Activated B cell treated with CpG ODN at 0.5 μM for 24 hours (primary cell): ENCODE measurements at regions of chr12 and their contacts with region 1.

Region 1: DNA sequence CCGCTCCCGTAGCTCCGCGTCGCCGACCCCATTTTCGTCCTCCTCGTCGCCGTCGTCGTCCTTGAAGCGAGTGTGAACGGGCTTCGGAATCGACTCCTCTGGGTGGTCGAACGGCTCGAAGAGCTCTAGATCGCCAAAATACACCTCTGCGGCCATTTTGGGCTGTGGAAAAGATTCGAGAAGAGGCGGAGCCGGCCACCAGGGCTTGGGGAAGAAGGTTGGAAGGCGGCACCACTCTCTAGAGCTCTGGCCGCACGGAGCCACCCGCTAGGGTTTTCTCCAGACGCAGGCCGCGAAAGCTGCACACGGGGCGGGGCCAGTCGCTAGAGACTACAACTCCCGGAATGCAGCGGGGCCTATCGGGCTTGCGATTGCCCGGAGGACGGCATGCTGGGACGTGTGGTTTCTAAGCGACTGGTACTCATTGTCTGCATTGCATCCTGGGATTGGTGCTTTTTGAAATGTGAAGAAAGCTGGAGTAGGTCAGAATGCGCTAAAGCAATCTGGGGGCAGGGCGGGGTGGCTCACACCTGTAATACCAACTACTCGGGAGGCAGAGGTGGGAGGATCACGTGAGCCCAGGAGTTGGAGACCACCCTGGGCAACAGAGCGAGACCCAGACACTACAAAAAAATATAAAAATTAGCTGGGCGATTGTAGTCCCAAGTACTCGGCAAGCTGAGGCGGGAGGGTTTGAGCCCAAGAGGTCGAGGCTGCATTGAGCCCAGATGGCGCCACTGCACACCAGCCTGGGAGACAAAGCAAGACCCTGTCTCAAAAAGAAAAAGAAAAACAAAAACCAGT is at the start of gene ZCCHC8:
- DNase-seq: peak; percentile 89
- ATAC-seq: peak; percentile 92
- H3K4me3 Mint-ChIP-seq: peak within 1 kb of the TSS; percentile 97
- H3K27ac Mint-ChIP-seq: peak within 1 kb of the TSS; percentile 97
- H3K4me1 Mint-ChIP-seq: peaks cover 44% of the 10 kb centered on the region
- H3K27me3 Mint-ChIP-seq: no peaks in the 10 kb centered on the region
- CTCF ChIP-seq: no peak
- total RNA-seq, gene ZCCHC8: 39.8 and 48.0 TPM in 2 replicates

Region 2: DNA sequence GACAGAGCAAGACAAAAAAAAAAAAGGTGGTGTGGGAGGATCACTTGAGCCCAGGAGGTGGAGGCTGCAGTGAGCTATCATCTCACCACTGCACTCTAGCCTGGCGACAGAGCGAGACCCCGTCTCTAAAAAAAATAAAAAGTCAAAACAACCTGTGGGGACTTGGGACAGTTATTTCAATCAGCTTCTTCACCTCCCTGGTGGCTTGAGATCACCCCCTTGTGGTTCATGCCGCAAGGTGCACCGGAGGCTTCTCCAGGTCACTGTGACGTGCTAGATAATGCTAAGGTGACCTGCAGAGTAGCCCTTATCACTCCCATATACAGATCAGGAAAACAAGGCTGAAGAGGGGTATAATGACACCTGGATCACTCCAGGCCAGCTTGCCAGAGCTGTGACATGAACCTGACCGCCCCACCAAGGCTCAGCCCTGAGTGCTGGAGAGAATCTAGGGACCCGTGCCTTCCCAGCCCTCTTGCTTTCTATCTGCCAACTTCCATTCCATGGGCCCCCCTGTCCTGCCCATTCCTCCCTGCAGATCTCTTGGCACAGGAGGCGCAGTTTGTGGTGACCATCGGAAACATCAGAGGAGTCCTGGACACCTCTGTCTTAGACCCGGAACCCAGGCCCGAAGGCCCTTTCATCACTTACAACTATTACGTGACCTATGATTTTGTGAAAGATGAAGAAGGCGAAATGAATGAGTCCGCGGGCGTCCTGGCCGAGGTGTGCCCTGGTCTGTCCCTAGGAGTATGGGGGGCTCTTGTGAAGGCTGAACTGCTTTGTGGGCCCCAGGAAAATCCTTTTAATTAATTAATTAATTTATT is 309.8 kb before region 1 on chr12:
- CTCF ChIA-PET with region 1: no interaction called
- POLR2A ChIA-PET with region 1: no interaction called
- intact Hi-C with region 1: no loop called
- DNase-seq: peak; percentile 42
- ATAC-seq: peak; percentile 92
- H3K4me3 Mint-ChIP-seq: no peak overlapping the region
- H3K27ac Mint-ChIP-seq: no peak overlapping the region
- H3K4me1 Mint-ChIP-seq: no peaks in the 10 kb centered on the region
- H3K27me3 Mint-ChIP-seq: no peaks in the 10 kb centered on the region
- CTCF ChIP-seq: no peak

Region 3: DNA sequence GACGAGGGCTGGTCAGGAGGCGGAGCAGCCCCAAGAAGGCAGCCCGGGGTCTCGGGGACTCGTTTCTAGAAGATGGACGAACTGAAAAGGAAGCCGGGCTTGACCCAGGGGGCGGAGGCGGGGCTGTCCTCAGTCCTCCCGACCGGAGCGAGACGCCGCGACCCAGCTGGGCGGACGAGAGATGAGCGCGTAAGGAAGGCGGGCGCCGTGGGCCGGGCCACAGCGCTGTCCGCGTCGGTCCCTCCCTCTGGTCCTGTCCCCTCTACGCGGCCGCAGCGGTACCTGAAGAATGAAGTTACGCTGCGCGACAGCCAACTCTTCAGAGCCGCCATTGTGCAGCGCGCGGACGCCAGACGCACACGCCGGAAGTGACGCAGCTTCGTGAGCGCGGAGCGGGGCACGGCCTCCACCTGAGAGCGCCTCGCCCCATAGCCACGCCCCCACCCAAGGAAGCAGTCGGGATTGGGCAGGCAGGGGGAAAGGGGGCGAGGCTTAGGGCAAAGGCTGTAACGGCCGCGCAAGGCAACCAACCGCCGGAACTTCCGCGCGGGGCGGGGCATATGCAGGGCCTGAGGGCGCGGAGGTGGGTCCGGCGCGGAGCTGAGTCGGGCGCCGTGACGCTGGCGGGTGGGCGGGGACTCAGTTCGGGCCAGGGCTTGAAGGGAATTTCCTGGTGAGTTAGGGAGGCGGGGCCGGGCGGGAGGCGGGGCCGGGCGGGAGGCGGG is 275.0 kb before region 1 on chr12 and contains the start of gene DIABLO:
- CTCF ChIA-PET with region 1: no interaction called
- POLR2A ChIA-PET with region 1: interaction called, 15 read pairs
- intact Hi-C with region 1: loop called (anchors 1 kb)
- DNase-seq: peak; percentile 99
- ATAC-seq: peak; percentile 93
- H3K4me3 Mint-ChIP-seq: peak within 1 kb of the TSS; percentile 89
- H3K27ac Mint-ChIP-seq: peak within 1 kb of the TSS; percentile 89
- H3K4me1 Mint-ChIP-seq: peaks cover 26% of the 10 kb centered on the region
- H3K27me3 Mint-ChIP-seq: no peaks in the 10 kb centered on the region
- CTCF ChIP-seq: no peak
- total RNA-seq, gene DIABLO: 39.8 and 51.3 TPM in 2 replicates

Region 4: DNA sequence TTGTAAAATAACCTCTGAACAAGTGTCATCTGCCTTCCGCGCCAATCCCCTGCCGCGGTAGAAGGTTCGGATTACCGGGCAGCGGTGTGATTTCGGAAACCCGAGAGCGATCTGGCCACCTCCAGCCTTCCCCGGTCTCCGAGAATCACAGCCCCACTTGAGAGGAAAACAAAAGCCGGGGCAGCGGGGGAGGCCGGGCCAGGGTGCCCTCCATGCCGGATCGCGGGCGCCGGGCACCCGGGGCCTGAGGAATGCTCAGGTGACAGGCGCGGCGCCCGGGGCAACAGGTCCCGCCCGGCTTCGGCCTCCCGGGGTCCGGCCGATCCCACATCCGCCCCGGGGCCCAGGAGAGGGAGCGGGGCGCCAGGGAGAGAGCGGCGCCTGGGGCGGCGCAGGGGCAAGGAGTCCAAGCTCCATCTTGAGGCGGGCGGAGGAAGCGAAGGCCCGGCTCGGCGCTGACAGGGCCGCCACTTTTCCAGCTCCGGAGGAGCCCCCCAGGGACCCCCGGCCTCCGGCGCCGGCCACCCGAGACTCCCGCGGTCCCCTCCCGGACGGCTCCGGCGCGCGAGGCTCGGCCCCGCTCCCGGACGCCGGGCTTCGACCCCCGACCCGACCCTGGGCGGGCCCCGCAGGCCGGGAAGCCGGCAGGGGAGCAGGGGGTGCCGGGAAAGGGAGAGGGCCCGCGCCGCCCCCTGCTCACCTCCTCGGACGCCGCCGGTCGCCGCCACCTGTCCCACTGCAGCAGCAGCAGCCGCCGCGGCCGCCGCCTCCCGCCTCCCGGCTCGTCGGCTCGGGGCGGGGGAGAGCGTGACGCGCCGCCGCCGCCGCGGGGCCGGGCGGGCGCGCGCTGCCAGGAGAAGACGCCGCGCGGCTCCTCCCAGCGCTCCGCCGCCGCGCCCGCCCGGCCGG is 78.8 kb before region 1 on chr12 and contains the start of gene CLIP1:
- CTCF ChIA-PET with region 1: interaction called, 3 read pairs
- POLR2A ChIA-PET with region 1: interaction called, 7 read pairs
- intact Hi-C with region 1: loop called (anchors 2 kb)
- DNase-seq: peak; percentile 71
- ATAC-seq: peak; percentile 67
- H3K4me3 Mint-ChIP-seq: peak within 1 kb of the TSS; percentile 91
- H3K27ac Mint-ChIP-seq: peak within 1 kb of the TSS; percentile 90
- H3K4me1 Mint-ChIP-seq: peaks cover 59% of the 10 kb centered on the region
- H3K27me3 Mint-ChIP-seq: no peaks in the 10 kb centered on the region
- CTCF ChIP-seq: no peak
- total RNA-seq, gene CLIP1: 58.6 and 63.2 TPM in 2 replicates

Region 5: DNA sequence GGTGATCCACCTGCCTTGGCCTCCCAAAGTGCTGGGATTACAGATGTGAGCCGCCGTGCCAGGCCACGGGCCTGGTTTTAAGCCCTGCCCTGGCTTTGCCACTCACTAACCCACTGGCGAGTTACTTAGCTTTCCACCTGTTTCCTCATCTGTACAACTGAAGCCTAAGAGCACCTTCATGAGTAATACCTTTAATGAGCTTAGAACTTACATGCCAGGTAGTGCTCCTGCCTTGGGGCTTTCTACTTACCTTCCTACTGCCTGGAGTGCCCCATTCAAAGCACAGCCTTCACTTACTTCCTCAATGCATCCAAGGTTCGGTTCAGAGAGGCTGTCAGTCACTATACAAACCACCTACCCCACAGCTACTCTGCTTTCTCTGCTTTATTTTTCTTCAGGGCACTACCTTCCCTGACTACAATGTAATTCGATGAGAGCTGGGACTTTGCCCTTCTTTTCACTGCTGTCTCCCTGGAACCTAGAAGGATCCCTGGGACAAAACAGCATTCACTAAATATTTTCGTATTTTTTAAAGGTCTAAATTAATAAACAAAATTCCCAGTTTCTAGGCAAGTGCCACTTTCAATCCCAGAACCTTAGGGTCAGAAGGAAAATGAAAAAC is 14.0 kb before region 1 on chr12:
- CTCF ChIA-PET with region 1: no interaction called
- POLR2A ChIA-PET with region 1: interaction called, 11 read pairs
- intact Hi-C with region 1: no loop called
- DNase-seq: no peak
- ATAC-seq: no peak
- H3K4me3 Mint-ChIP-seq: no peak overlapping the region
- H3K27ac Mint-ChIP-seq: no peak overlapping the region
- H3K4me1 Mint-ChIP-seq: peaks cover 4% of the 10 kb centered on the region
- H3K27me3 Mint-ChIP-seq: no peaks in the 10 kb centered on the region
- CTCF ChIP-seq: no peak

Region 6: GRCh38 chr12:122526683-122527477 is 26.0 kb after region 1 on chr12 and contains the starts of genes KNTC1 and RSRC2:
- CTCF ChIA-PET with region 1: interaction called, 7 read pairs
- POLR2A ChIA-PET with region 1: interaction called, 202 read pairs
- intact Hi-C with region 1: loop called (anchors 1 kb)
- DNase-seq: peak; percentile 85
- ATAC-seq: peak; percentile 91
- H3K4me3 Mint-ChIP-seq: no peak within 1 kb of the TSS
- H3K27ac Mint-ChIP-seq: no peak within 1 kb of the TSS
- H3K4me1 Mint-ChIP-seq: peaks cover 43% of the 10 kb centered on the region
- H3K27me3 Mint-ChIP-seq: no peaks in the 10 kb centered on the region
- CTCF ChIP-seq: no peak
- total RNA-seq, gene KNTC1: 45.5 and 64.0 TPM in 2 replicates
- total RNA-seq, gene RSRC2: 106 and 126 TPM in 2 replicates

Region 7: GRCh38 chr12:122726080-122726558 is 225.2 kb after region 1 on chr12:
- CTCF ChIA-PET with region 1: no interaction called
- POLR2A ChIA-PET with region 1: interaction called, 5 read pairs
- intact Hi-C with region 1: loop called (anchors 5 kb)
- DNase-seq: no peak
- ATAC-seq: peak; percentile 45
- H3K4me3 Mint-ChIP-seq: peak overlapping the region; percentile 36
- H3K27ac Mint-ChIP-seq: peak overlapping the region; percentile 79
- H3K4me1 Mint-ChIP-seq: peaks cover 33% of the 10 kb centered on the region
- H3K27me3 Mint-ChIP-seq: no peaks in the 10 kb centered on the region
- CTCF ChIP-seq: no peak

Region 8: DNA sequence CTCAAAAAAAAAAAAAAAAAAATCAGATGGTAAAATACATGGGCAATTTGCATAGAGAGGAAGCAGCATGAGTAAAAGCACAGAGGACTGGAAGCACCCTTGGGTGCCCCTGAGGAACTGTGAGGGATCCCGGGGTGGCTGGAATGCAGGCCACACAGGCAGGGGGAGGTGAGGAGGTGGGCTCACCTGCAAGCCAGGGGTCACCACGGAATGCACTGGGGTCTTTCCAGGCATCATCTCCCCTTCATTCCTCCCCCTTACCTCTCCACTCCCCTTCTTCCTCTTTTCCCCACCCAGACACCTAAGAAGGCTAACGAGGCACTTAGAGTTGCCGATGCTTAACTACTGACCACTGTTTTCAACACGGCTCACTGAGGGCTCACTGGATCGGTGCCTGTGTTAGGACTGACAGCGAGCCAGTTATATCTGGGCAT is 320.0 kb after region 1 on chr12:
- CTCF ChIA-PET with region 1: no interaction called
- POLR2A ChIA-PET with region 1: no interaction called
- intact Hi-C with region 1: loop called (anchors 5 kb)
- DNase-seq: peak; percentile 52
- ATAC-seq: peak; percentile 85
- H3K4me3 Mint-ChIP-seq: peak overlapping the region; percentile 60
- H3K27ac Mint-ChIP-seq: peak overlapping the region; percentile 95
- H3K4me1 Mint-ChIP-seq: peaks cover 57% of the 10 kb centered on the region
- H3K27me3 Mint-ChIP-seq: no peaks in the 10 kb centered on the region
- CTCF ChIP-seq: no peak